Spleen (tissue), 13 donors: ENCODE measurements at regions of chr9 and their contacts with region 1.

Region 1: GRCh38 chr9:14056316-14056861 is 257.6 kb downstream of the NFIB start:
- DNase-seq: no peak
- H3K4me3 ChIP-seq: no peak overlapping the region
- H3K27ac ChIP-seq: no peak overlapping the region
- H3K4me1 ChIP-seq: peaks cover 0 to 6% (median 0%) of the 10 kb centered on the region in 6 donors
- H3K27me3 ChIP-seq: no peaks in the 10 kb centered on the region
- CTCF ChIP-seq: no peak
- POLR2A ChIP-seq: no peak

Region 2: GRCh38 chr9:13778631-13779030 is 277.8 kb before region 1 on chr9:
- intact Hi-C with region 1: loop called (anchors 10 kb)
- DNase-seq: no peak
- H3K4me3 ChIP-seq: no peak overlapping the region
- H3K27ac ChIP-seq: no peak overlapping the region
- H3K4me1 ChIP-seq: no peaks in the 10 kb centered on the region
- H3K27me3 ChIP-seq: no peaks in the 10 kb centered on the region
- CTCF ChIP-seq: no peak
- POLR2A ChIP-seq: no peak